ENCODE measurements at regions of chr13 and their contacts with region 1.

Region 1: GRCh38 chr13:29923554-29924481 is 73.4 kb upstream of the UBL3 start:
- DNase-seq: peak; percentile 50
- ATAC-seq: peak; percentile 44
- H3K4me3 Mint-ChIP-seq: no peak overlapping the region
- H3K27ac Mint-ChIP-seq: no peak overlapping the region
- H3K4me1 Mint-ChIP-seq: peaks cover 22% of the 10 kb centered on the region
- H3K27me3 Mint-ChIP-seq: peaks cover 2% of the 10 kb centered on the region

Region 2: DNA sequence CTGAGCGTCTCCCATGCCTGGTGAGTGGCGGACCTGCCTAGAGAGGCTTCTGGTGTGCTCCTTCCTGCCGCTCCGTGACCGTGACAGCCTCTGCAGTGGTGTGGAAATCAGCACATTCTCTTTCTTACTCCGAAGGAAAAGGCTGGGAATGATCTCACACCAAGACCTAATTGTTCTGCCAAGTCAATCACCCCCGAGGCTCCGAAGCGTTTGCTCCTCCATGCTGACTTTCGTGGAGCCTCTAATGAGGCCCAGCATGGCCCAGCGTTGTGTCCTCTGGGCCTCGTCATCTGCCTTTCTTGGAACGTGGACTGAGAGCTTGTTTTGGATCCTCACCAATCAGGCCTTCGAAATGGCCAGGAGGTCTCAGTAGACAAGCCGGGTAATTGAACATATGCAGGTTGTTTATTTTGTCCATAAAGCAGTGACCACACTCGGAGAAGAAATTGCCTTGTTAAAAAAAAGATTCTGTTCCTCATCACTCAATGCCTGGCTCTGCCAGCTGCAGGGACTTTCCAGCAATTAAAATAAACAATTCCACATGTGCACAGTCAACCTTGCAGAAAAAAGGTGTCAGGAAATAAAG is 180.5 kb before region 1 on chr13:
- CTCF ChIA-PET with region 1: no interaction called
- POLR2A ChIA-PET with region 1: no interaction called
- DNase-seq: no peak
- ATAC-seq: no peak
- H3K4me3 Mint-ChIP-seq: no peak overlapping the region
- H3K27ac Mint-ChIP-seq: no peak overlapping the region
- H3K4me1 Mint-ChIP-seq: no peaks in the 10 kb centered on the region
- H3K27me3 Mint-ChIP-seq: peaks cover 15% of the 10 kb centered on the region

Region 3: DNA sequence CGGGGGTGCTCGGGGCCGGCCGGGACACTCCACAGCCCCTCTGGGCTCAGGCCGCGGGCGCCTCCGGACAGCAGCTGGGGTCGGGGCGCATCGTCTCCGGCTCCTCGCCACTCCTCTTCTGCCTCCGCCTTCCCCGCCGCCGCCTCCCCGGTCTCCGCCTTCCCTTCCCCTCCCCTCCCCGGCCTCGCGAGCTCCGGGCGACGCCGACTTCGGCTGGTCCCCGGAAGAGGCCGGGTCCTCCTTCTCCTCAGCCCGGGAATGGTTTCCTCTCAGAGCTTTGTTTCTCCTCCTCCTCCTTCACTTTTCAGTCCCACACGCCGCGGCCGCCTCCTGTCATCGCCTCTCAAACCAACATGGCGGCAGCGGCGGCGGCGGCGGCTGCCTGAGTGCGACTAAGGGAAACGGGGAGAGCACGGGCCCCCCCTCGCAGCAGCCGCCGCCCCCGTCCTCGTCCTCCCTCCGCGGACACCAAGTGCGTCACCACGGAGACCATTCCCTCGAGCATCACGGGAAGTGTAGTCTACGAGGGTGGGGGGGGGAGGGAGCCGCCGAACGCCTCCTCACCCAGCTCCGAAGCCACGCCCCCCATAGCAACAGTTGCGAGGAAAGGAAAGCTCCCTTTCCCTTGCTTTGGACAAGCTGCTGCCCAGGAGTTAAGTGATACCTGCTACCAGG is 73.5 kb before region 1 on chr13 and contains the start of gene UBL3:
- CTCF ChIA-PET with region 1: interaction called, 77 read pairs
- POLR2A ChIA-PET with region 1: no interaction called
- DNase-seq: peak; percentile 96
- ATAC-seq: peak; percentile 89
- H3K4me3 Mint-ChIP-seq: peak within 1 kb of the TSS; percentile 86
- H3K27ac Mint-ChIP-seq: peak within 1 kb of the TSS; percentile 99
- H3K4me1 Mint-ChIP-seq: peaks cover 35% of the 10 kb centered on the region
- H3K27me3 Mint-ChIP-seq: no peaks in the 10 kb centered on the region
- total RNA-seq, gene UBL3: 7.3 to 8.4 TPM

Region 4: DNA sequence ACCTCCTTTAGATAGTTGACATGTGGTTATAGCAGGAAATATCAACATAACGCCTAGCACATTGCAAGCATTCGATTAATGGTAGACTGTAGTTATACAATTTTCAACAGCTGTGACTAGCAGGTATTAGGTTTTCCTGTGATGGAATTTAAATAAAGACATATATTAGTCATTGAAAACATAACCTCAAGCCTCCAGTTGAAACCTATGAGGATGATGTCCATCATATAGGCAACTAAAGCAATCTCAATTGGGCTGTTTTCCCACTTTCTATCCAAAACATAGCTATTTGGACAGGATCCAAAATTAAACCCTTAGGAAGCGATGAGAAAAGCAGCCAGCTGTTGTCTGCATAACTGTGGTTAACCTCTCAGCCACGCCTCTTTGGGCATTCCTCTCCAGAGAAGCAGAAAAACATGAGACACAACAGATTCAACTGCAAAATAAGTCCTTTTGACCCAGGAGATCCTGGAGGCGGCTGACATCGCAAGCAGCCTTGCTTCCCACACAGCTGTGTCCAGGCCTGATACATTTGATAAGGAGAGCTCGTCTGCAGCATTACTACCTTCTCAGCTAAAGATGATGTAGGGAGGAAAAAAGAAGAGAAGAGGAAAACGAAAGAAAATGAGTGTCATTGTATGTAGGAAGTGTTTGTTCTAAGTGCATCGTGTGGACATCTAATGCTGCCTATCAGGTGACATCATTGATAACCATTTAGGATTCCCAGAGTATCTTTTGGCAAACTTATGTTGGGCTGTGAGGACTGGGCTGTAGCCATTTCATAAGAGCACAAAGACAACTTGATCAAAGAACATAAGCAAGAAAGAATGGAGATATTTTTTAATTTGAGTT is 21.5 kb before region 1 on chr13:
- CTCF ChIA-PET with region 1: interaction called, 15 read pairs
- POLR2A ChIA-PET with region 1: no interaction called
- DNase-seq: peak; percentile 35
- ATAC-seq: no peak
- H3K4me3 Mint-ChIP-seq: peak overlapping the region; percentile 62
- H3K27ac Mint-ChIP-seq: peak overlapping the region; percentile 67
- H3K4me1 Mint-ChIP-seq: peaks cover 18% of the 10 kb centered on the region
- H3K27me3 Mint-ChIP-seq: peaks cover 19% of the 10 kb centered on the region

Region 5: DNA sequence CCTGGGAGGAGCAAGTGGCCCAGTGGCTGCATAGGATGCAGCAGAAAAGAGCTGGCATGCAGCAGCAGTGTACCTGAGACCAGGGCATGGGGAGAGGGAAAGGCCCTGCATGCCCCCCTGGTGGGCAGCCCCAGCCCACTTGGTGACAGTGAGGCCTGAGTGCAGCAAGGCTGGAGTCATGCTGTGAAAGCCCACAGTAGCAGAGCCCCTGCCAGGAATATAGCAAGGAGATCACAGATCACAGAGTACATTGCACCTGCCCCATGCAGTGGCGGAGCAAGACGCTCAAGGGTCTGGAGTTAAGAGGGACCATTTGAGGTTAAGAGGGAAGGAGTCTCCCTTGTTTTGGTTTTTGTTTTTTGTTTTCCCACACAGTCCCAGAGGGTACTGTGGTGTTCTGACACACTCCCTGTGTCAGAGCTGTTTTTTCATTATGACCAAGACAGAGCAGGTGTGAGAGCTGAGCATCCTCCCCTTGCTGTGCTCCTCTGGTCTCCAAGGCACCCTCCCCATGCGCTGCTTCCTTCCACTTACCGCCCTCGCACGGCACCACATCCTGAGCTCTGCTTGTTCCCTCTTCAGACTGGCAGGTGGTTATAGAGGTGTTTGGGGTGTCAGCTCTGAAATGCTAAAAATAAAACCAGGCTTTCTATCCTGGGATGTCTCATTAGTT is 11.6 kb after region 1 on chr13:
- CTCF ChIA-PET with region 1: interaction called, 65 read pairs
- POLR2A ChIA-PET with region 1: interaction called, 4 read pairs
- DNase-seq: peak; percentile 90
- ATAC-seq: peak; percentile 95
- H3K4me3 Mint-ChIP-seq: peak overlapping the region; percentile 83
- H3K27ac Mint-ChIP-seq: peak overlapping the region; percentile 95
- H3K4me1 Mint-ChIP-seq: peaks cover 44% of the 10 kb centered on the region
- H3K27me3 Mint-ChIP-seq: peaks cover 1% of the 10 kb centered on the region

Region 6: DNA sequence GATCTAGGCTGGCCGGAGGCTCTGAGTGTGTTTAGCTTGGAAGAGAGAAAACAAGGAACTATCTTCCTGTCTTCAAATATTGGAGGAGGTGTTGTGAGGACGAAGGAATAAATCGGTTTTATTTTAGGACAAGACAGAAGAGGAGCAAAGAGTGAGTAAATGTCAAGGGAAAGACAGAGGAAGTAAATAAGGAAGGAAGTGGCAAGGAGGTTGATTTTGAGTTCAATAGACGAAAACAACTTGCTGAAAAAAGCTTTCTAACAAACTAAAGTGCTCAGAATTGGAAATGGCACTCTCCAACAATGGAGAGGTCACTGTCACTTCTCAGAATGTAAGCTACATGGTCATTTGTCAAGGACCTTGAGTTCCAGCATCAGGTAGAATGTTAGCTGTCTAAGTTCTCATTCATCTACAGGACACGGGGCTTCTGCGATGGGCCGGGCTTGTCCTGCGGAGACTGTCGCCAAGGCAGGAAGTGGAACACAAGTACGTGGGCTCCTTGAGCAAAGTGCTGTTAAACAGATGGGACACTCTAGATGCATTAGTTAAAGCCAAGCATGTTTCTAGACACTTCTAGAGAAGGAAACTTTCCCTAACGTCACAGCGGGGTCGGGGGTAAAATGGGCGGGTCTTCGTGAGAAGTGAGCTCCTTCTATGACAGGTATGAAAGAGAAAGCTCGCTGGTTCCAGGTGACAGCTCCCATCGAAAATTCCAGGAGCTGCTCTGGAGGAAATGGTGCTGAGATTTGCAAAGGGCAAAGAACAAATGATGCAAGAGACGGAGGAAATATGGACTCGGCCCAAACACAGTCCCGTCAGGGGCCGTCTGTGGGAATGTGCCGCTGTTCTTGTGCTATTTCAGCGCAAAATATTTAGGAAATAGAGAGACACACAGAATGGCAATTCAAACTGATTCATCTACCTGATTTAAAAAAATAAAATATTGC is 30.5 kb after region 1 on chr13:
- CTCF ChIA-PET with region 1: interaction called, 20 read pairs
- POLR2A ChIA-PET with region 1: no interaction called
- DNase-seq: peak; percentile 75
- ATAC-seq: peak; percentile 96
- H3K4me3 Mint-ChIP-seq: peak overlapping the region; percentile 69
- H3K27ac Mint-ChIP-seq: peak overlapping the region; percentile 88
- H3K4me1 Mint-ChIP-seq: peaks cover 52% of the 10 kb centered on the region
- H3K27me3 Mint-ChIP-seq: peaks cover 2% of the 10 kb centered on the region